ENCODE measurements at regions of chr10 and their contacts with region 1.

Region 1: DNA sequence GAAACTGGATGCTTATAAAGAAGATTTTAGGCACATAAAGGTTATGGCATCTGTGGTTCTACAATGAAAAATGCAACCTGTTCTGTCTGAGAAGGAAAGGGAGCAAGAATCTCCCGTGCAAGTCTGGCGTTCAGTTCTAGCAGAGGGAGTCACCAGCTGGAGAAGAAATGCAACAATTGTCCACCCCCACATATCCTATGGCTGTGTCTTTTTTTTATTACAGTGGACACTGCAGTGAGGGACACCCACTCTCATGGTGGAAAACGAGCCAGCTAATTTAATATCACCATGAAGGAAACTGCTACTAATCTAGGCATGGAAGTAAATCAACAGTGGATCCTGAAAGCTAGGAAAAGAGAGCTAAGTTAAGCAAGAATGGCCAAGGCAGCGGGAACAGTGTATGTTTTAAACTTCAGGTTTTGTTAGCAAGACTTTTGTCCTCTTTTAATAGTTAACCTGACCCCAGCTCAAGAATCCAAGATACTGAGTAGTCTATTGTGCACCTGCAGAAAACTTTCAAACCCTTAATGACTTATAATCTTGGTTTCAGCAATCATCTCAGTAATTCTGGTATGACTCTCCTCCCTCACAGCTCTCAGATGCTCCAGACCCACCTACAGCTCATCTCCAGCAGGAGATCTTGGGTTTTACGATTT is 149.3 kb downstream of the FGFR2 start:
- DNase-seq: peak; percentile 40
- ATAC-seq: peak; percentile 95
- H3K4me3 ChIP-seq: no peak overlapping the region
- H3K27ac ChIP-seq: no peak overlapping the region
- H3K4me1 ChIP-seq: no peaks in the 10 kb centered on the region
- H3K27me3 ChIP-seq: no peaks in the 10 kb centered on the region; a peak in 1 of 4 replicates
- CTCF ChIP-seq: no peak
- EP300 ChIP-seq: peak in 1 of 2 experiments; percentile 82; a peak in 1 of 4 replicates
- POLR2A ChIP-seq: no peak
- RAD21 ChIP-seq: no peak

Region 2: DNA sequence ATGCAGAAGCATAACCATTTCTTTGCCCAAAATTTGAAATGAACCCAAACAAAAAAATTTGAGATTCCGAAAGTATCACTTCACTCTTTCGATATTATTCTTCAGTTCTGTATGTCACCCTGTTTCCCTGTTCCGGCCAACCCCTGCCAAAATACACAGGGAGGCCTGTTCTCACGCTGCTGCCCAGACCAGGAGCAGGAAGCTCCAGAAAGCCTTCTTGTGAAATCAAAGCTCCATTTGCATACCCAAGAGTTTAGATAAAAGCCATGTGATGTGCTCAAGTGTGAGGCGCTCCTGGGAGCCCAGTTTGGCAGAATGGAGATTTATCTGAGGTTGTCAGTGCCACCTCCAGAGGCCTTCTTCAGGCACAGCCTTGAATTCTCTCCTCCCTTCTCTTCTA is 86.9 kb before region 1 on chr10:
- CTCF ChIA-PET with region 1: no interaction called
- POLR2A ChIA-PET with region 1: no interaction called
- RAD21 ChIA-PET with region 1: no interaction called
- SMC1A ChIA-PET with region 1: no interaction called
- in situ Hi-C with region 1: no loop called
- intact Hi-C with region 1: loop called (anchors 5 kb)
- DNase-seq: no peak
- ATAC-seq: peak; percentile 88
- H3K4me3 ChIP-seq: no peak overlapping the region
- H3K27ac ChIP-seq: no peak overlapping the region
- H3K4me1 ChIP-seq: no peaks in the 10 kb centered on the region
- H3K27me3 ChIP-seq: no peaks in the 10 kb centered on the region
- CTCF ChIP-seq: no peak
- EP300 ChIP-seq: no peak
- POLR2A ChIP-seq: no peak
- RAD21 ChIP-seq: no peak

Region 3: GRCh38 chr10:122019414-122019975 is 570.6 kb after region 1 on chr10:
- CTCF ChIA-PET with region 1: no interaction called
- POLR2A ChIA-PET with region 1: no interaction called
- RAD21 ChIA-PET with region 1: no interaction called
- SMC1A ChIA-PET with region 1: no interaction called
- in situ Hi-C with region 1: no loop called
- intact Hi-C with region 1: no loop called
- DNase-seq: no peak
- ATAC-seq: no peak
- H3K4me3 ChIP-seq: no peak overlapping the region
- H3K27ac ChIP-seq: no peak overlapping the region
- H3K4me1 ChIP-seq: no peaks in the 10 kb centered on the region
- H3K27me3 ChIP-seq: no peaks in the 10 kb centered on the region; a peak in 2 of 4 replicates
- CTCF ChIP-seq: no peak
- EP300 ChIP-seq: no peak
- POLR2A ChIP-seq: no peak
- RAD21 ChIP-seq: no peak

Measured in GM12878 (cell line).